Adrenal gland (tissue), 19 donors: ENCODE measurements at regions of chr21 and their contacts with region 1.

Region 1: GRCh38 chr21:25708467-25709065 is 26.1 kb downstream of the ATP5PF start:
- DNase-seq: peak; percentile 24 to 78 (median 51)
- H3K4me3 ChIP-seq: no peak overlapping the region
- H3K27ac ChIP-seq: no peak overlapping the region
- H3K4me1 ChIP-seq: no peaks in the 10 kb centered on the region
- H3K27me3 ChIP-seq: no peaks in the 10 kb centered on the region
- CTCF ChIP-seq: peak; percentile 76 to 92 (median 84)
- POLR2A ChIP-seq: no peak

Region 2: DNA sequence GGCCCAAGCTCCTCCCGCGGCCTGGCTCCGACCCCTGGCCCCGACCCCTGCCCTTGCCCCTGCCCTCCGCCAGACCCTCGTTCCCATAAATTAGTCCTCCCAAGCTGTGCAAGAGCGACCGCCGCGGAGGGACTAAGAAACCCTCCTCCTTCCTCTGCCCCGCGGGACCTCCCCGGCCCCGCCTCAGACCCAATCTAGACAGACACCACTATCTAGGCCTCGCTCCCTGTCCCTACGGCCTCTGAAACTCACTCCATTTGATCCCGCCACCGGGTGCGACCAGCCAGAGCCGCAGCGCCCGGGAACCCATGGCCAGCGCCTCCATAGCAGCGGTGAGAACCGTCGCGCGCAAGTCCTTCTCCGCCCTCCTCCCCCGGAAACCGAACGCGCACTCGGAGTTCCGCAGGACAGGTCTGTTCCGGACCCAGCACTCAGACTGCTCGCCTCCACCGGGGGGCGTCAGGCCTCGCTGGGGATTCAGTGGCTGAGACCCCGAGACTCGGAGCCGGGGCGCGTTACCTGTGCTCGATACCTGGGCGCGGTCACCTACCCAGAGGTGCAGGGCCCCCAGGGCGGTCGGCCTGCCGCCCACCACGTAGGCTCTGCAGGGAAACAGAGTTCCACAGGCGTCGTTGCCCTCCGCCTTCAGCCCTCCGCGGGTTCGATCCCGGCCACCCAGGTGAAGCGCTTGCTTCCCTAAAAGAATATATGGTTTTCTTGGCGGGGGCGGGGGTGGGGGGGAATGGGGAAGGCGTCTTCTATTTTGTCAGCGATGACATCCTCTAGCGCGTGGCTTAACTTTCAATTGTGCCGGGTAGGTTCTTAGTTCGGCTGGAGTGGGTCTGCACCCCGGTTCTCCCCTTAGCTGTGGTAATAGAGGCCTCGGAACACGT is 101.2 kb before region 1 on chr21 and contains the start of gene MRPL39:
- intact Hi-C with region 1: loop called (anchors 2 to 5 kb)
- DNase-seq: peak; percentile 83 to 93 (median 90)
- H3K4me3 ChIP-seq: peak within 1 kb of the TSS; percentile 75 to 92 (median 82)
- H3K27ac ChIP-seq: peak within 1 kb of the TSS; percentile 34 to 91 (median 84)
- H3K4me1 ChIP-seq: peaks cover 0 to 27% of the 10 kb centered on the region in 2 donors
- H3K27me3 ChIP-seq: no peaks in the 10 kb centered on the region
- CTCF ChIP-seq: peak; percentile 23 to 62 (median 48)
- POLR2A ChIP-seq: peak in 1 of 2 donors; percentile 51
- total RNA-seq, gene MRPL39: 19.4 to 85.5 (median 42.8) TPM

Region 3: GRCh38 chr21:25903602-25904001 is 195.0 kb after region 1 on chr21:
- intact Hi-C with region 1: no loop called
- DNase-seq: no peak
- H3K4me3 ChIP-seq: no peak overlapping the region
- H3K27ac ChIP-seq: peak overlapping the region in 2 of 5 donors; percentile 27 to 64
- H3K4me1 ChIP-seq: peaks cover 15 to 35% of the 10 kb centered on the region in 2 donors
- H3K27me3 ChIP-seq: no peaks in the 10 kb centered on the region
- CTCF ChIP-seq: no peak
- POLR2A ChIP-seq: no peak